Posterior cingulate gyrus (tissue), 11 donors: ENCODE measurements at regions of chr9 and their contacts with region 1.

Region 1: GRCh38 chr9:134325817-134326723 is at the start of gene RXRA:
- DNase-seq: peak in 9 of 10 donors; percentile 47 to 94 (median 64)

Region 2: GRCh38 chr9:133945314-133945975 is 380.6 kb before region 1 on chr9:
- intact Hi-C with region 1: no loop called
- DNase-seq: peak in 7 of 10 donors; percentile 1 to 81 (median 22)

Region 3: GRCh38 chr9:134178768-134179551 is 147.1 kb before region 1 on chr9:
- intact Hi-C with region 1: loop called (anchors 10 kb)
- DNase-seq: peak in 4 of 10 donors; percentile 16 to 88 (median 79)

Region 4: DNA sequence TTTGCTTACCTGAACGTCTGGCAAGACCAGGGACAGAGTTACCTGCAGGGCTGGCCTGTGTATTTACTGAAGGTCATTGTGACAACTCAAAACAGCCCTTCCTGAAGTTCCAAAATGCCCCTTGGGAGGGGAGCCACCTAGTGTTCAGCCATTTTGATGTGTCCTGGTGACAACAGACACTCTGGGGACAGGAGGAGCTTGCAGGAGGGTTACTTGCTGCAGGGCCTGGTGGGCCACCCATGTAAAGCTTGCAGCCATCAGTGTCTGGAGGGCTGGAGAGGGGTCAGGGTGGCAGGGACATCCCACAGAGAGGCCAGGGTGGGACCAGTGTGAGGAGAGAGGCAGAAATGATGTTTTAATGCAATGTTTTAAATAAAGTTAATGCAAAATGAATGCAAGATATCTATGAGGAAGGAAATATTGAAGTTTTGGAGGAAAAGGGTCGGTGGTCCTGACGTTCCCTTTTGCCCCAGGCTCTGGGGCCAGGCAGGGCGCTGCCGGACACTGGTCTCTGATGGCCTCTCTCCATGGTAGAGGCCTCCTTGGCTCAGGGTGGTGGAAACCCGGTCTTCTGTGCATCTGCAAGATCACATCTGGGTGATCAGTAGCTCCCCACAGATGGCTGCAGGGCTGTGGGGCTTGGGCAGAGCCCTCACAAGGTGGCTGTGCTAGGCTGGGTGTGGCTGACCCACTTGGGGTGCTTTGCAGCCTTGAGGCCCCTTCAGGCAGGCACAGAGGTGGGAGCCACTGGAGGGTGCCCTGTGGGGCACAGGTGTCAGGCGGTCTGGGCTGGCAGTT is 108.0 kb before region 1 on chr9:
- intact Hi-C with region 1: loop called (anchors 10 kb)
- DNase-seq: peak in 3 of 10 donors; percentile 35 to 74 (median 46)

Region 5: DNA sequence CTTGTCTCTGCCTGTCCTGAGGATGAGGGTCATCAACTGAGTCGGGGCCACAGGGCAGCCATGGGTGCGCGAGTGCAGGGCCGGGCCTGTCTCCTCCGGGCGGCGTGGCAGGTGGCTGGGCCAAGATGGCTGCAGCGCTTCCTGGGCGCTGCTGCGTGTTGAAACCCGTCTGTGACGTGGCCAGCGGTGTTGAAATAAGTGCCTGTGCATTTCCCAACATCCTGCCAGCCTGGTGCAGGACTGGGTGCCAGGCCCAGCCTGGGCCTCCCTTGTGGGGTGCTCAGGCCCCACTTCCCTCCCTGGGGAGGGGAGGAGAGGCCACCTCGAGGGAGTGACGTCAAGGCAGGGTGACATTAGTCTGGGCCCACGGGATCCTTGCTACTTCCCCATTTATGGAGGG is 45.7 kb after region 1 on chr9:
- intact Hi-C with region 1: no loop called
- DNase-seq: peak in 3 of 10 donors; percentile 46 to 92 (median 48)

Region 6: GRCh38 chr9:134381671-134382516 is 55.8 kb after region 1 on chr9:
- intact Hi-C with region 1: loop called (anchors 10 kb)
- DNase-seq: no peak

Region 7: DNA sequence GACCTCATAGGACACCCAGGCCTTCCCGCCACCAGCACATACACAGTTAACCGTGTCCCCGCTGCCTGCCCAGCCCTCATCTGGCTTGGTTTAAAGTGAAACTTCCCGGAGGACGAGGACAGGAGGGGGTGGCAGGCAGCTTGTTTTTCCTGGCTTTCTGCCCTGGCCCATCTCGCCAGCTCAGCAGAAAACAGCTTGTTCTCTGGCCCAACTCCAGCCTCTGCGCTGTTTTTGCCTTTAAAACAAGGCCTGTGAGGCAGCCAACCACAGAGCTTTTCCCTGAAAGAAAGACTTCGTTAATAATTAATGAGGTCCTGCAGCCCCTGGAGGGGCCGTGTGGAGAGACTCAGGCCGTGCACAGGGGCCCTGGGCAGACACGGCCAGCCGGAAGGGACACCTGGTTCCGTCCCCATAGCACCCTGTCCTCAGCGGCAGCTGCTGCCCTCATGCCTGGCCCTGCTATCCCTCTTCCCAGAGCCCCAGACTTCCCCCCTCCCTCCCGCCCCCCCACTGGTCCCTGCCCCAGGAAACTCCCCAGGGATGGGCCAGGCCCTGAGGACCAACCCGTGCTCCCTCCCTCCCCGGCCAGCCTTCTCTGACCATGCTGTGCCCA is 108.9 kb after region 1 on chr9:
- intact Hi-C with region 1: loop called (anchors 2 kb)
- DNase-seq: peak; percentile 91 to 98 (median 94)